Upper lobe of right lung (tissue), 1 donor: ENCODE measurements at regions of chr5 and their contacts with region 1.

Region 1: GRCh38 chr5:17216176-17216973 is 1.1 kb upstream of the BASP1 start:
- DNase-seq: peak; percentile 83
- ATAC-seq: peak; percentile 67
- H3K4me3 ChIP-seq: peak overlapping the region; percentile 60
- H3K27ac ChIP-seq: no peak overlapping the region
- H3K4me1 ChIP-seq: peaks cover 9% of the 10 kb centered on the region
- H3K27me3 ChIP-seq: no peaks in the 10 kb centered on the region
- CTCF ChIP-seq: peak; percentile 73

Region 2: DNA sequence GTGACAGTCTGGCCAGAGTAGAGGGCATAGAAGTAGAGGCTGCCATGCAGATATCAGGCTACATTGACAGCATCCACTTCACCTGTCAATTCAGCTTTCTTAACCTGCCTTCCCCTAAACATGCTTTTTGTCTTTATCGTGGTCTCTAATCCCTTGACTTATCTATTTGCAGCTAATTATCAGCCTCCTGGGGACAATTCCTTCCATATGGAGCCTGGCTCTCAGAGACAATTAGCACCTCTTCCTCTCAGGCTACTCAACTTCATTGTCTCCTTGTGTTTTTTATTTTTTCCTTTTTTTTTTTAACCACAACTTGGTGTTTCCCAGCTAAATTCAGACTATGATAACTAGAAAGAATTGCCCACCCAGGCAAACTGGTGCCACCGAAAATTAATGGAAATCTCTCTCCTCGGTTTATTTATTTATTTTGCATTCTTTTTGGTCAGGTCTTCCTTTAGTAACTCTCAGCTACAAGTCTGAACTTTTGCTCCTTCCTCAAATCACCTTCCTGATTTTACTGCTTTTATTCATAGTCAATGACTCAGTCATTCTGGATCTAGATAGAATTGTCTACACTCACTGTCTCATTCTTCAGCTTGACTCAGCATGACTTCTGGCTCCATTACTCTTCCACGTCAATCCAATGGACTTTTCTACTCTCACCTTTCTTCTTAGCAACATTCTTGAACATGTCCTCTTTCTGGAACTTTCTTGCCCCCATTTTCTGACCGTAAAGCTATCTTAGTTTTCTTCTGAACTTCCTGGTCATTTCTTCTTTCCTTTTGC is 62.0 kb before region 1 on chr5:
- intact Hi-C with region 1: no loop called
- DNase-seq: no peak
- ATAC-seq: no peak
- H3K4me3 ChIP-seq: no peak overlapping the region
- H3K27ac ChIP-seq: no peak overlapping the region
- H3K4me1 ChIP-seq: no peaks in the 10 kb centered on the region
- H3K27me3 ChIP-seq: no peaks in the 10 kb centered on the region
- CTCF ChIP-seq: no peak

Region 3: GRCh38 chr5:18281682-18282557 is 1065.5 kb after region 1 on chr5:
- intact Hi-C with region 1: loop called (anchors 10 kb)
- DNase-seq: no peak
- ATAC-seq: peak; percentile 63
- H3K4me3 ChIP-seq: no peak overlapping the region
- H3K27ac ChIP-seq: no peak overlapping the region
- H3K4me1 ChIP-seq: no peaks in the 10 kb centered on the region
- H3K27me3 ChIP-seq: no peaks in the 10 kb centered on the region
- CTCF ChIP-seq: peak; percentile 44